ENCODE measurements at regions of chr16 and their contacts with region 1.

Region 1: GRCh38 chr16:77236063-77236511 is 36.9 kb downstream of the SYCE1L start:
- DNase-seq: peak; percentile 76 to 85
- H3K4me3 ChIP-seq: no peak overlapping the region
- H3K27ac ChIP-seq: no peak overlapping the region
- H3K4me1 ChIP-seq: no peaks in the 10 kb centered on the region
- H3K27me3 ChIP-seq: peaks cover 0 to 14% of the 10 kb centered on the region in 2 donors
- CTCF ChIP-seq: peak; percentile 98

Region 2: GRCh38 chr16:77093999-77094398 is 142.1 kb before region 1 on chr16:
- intact Hi-C with region 1: no loop called
- DNase-seq: no peak
- H3K4me3 ChIP-seq: no peak overlapping the region
- H3K27ac ChIP-seq: no peak overlapping the region
- H3K4me1 ChIP-seq: no peaks in the 10 kb centered on the region
- H3K27me3 ChIP-seq: no peaks in the 10 kb centered on the region
- CTCF ChIP-seq: no peak

Region 3: DNA sequence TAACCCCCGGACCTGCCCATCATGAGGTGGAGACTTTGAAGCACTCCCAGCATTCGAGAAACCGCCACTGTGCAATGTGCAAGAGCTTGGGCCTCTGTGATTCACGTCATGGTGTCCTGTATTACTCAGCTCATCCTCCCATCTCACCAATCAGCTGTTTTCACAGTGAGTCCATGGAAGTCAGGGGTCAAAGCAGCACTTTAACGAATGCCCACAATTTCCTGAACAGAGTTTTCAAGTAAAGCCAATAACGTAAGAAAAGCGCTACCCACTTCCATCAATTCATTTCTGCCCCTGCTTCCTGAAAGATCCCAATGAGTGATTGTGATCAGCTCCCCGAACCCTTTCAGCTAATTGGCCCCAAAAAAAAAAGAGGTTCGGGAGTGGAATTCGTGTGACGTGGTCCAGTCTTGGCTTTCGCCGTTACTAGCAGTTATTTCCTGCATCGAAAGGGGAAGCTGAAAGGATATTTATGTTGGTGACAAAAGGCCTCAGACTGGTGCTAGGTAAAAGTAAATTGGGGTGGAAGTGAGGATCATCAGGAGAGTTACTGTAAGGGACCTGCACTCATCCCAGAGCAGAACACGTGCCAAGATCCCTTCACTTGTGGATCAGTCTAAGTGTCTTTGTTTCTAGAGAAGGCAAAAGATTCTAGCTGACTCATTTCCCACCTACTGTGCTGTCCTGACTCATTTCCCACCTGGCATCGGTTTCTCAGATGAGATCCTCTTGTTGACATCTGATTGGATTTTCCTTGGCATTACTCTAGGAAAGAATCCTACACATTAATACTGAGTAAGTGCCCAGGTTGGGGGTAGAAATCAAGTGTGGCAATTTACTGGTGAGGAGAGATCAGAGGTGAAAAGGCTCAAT is 349.5 kb after region 1 on chr16:
- intact Hi-C with region 1: loop called (anchors 5 kb)
- DNase-seq: no peak
- H3K4me3 ChIP-seq: no peak overlapping the region
- H3K27ac ChIP-seq: no peak overlapping the region
- H3K4me1 ChIP-seq: no peaks in the 10 kb centered on the region
- H3K27me3 ChIP-seq: peaks cover 0 to 9% of the 10 kb centered on the region in 2 donors
- CTCF ChIP-seq: no peak